Activated T-helper 2 cell treated with anti-CD3 and anti-CD28 coated beads, Interferon-gamma antibody, Interleukin-2, Interleukin-4, amounts not matched to agents 10 μg/mL and 5 μg/mL and 100 μg/mL, durations not matched to agents 14 hours and 24 hours and 36 hours (primary cell): ENCODE measurements at regions of chr1 and their contacts with region 1.

Region 1: GRCh38 chr1:212608209-212608955 is at the start of gene ATF3:
- DNase-seq: peak; percentile 88
- H3K4me3 Mint-ChIP-seq: peak within 1 kb of the TSS; percentile 88
- H3K27ac Mint-ChIP-seq: peak within 1 kb of the TSS; percentile 91
- H3K4me1 Mint-ChIP-seq: peaks cover 44% of the 10 kb centered on the region
- H3K27me3 Mint-ChIP-seq: peaks cover 39% of the 10 kb centered on the region
- total RNA-seq, gene ATF3: 17.9 and 23.9 TPM in 2 replicates

Region 2: GRCh38 chr1:211393203-211393602 is 1215.2 kb before region 1 on chr1:
- intact Hi-C with region 1: no loop called
- DNase-seq: no peak
- H3K4me3 Mint-ChIP-seq: no peak overlapping the region
- H3K27ac Mint-ChIP-seq: no peak overlapping the region
- H3K4me1 Mint-ChIP-seq: no peaks in the 10 kb centered on the region
- H3K27me3 Mint-ChIP-seq: no peaks in the 10 kb centered on the region

Region 3: GRCh38 chr1:212381397-212382035 is 226.9 kb before region 1 on chr1:
- intact Hi-C with region 1: no loop called
- DNase-seq: no peak
- H3K4me3 Mint-ChIP-seq: no peak overlapping the region
- H3K27ac Mint-ChIP-seq: no peak overlapping the region
- H3K4me1 Mint-ChIP-seq: no peaks in the 10 kb centered on the region
- H3K27me3 Mint-ChIP-seq: no peaks in the 10 kb centered on the region

Region 4: DNA sequence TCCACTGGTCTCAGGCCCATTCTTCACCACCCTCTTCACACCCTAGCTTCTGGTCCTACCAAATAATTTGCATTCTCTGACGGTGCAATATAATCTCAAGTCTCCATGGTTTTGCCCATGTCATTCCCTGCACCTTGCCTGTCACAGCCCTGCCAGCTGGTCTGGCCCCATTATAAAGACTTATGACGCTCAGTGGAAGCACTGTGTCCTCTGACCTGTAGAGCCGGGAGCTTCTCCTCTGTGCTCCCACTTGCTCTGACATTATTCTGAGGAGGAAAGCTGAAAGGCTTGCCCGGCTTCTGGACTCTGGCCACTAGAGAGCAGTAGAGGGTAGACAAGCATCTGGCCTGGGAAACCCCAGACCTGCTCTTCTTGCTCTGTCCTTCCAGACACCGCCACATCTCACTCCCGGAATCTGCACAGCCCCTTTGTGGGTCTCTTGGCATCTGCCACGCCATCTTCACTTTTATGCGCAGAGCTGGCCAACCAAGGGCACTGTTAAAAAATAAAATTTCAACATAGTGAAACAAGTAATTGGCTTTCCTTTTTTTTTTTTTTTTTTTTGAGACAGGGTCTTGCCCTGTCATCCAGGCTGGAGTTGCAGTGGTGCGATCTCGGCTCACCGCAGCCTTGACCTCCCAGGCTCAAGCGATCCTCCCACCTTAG is 131.2 kb before region 1 on chr1:
- intact Hi-C with region 1: loop called (anchors 2 kb)
- DNase-seq: peak; percentile 65
- H3K4me3 Mint-ChIP-seq: no peak overlapping the region
- H3K27ac Mint-ChIP-seq: peak overlapping the region; percentile 16
- H3K4me1 Mint-ChIP-seq: peaks cover 12% of the 10 kb centered on the region
- H3K27me3 Mint-ChIP-seq: peaks cover 17% of the 10 kb centered on the region

Region 5: DNA sequence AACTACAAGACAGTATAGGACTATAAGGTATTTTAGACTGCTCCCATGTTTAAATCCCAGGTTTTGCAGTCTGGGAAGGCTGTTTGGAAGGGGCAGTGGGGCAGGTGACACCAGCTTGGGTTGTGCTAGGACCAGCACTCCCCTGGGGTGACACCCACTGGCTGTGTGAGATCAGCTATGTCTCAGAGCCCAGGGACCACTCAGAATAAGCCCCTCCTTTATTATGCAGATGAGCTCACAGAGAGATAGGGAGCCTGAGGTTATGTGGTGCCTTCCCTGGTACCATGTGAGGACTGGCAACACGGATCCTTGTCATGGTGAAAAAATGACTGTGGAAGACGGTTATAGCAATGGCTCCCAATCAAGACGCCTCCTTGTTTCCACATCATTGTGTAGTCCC is 104.7 kb before region 1 on chr1:
- intact Hi-C with region 1: no loop called
- DNase-seq: no peak
- H3K4me3 Mint-ChIP-seq: no peak overlapping the region
- H3K27ac Mint-ChIP-seq: no peak overlapping the region
- H3K4me1 Mint-ChIP-seq: no peaks in the 10 kb centered on the region
- H3K27me3 Mint-ChIP-seq: peaks cover 13% of the 10 kb centered on the region

Region 6: GRCh38 chr1:212558693-212559480 is 49.5 kb before region 1 on chr1:
- intact Hi-C with region 1: loop called (anchors 1 kb)
- DNase-seq: peak; percentile 86
- H3K4me3 Mint-ChIP-seq: peak overlapping the region; percentile 66
- H3K27ac Mint-ChIP-seq: peak overlapping the region; percentile 89
- H3K4me1 Mint-ChIP-seq: peaks cover 9% of the 10 kb centered on the region
- H3K27me3 Mint-ChIP-seq: peaks cover 33% of the 10 kb centered on the region

Region 7: DNA sequence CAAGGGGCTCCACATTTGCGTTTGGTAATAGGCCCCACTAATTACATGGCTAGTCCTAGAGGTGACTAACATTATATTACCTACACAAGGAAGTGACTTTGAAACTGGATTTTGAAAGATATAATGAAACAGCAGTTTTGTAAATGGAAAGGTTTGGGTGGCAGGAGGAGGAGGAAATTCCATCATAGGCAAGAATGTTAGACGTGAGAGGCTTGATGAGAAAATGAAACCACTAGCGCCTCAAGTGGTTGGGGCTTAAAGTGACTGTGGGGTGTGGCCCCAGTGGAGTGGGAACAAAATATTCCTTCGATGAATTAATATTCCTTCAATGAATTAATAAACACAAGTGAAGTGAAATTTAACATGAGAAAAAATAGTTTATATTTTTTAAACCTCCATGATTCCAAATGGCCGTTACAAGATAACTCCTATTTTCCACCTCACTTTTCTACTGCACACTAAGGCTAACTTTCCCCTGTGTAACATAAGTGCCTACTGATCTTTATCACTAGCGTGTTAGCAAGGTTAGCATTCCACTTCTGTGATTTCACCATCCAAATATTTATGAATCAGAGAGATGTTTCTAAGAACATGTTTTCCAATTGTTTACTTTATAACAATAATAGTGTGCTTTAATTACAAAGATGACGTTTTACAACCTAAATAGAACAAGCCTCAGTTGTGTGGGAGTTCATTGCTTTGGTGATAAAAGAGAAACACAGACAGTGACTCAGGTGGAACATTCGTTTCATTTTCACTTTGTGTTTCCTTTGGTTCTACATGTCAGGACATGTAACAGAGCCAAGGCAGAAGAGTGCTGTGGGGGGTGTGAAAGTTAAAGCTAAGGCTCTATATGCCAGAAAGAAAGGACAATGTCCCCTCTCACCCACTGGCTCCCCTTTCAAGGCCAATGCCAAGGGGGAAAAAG is 12.3 kb before region 1 on chr1:
- intact Hi-C with region 1: loop called (anchors 1 kb)
- DNase-seq: peak; percentile 55
- H3K4me3 Mint-ChIP-seq: peak overlapping the region; percentile 43
- H3K27ac Mint-ChIP-seq: peak overlapping the region; percentile 91
- H3K4me1 Mint-ChIP-seq: peaks cover 26% of the 10 kb centered on the region
- H3K27me3 Mint-ChIP-seq: peaks cover 7% of the 10 kb centered on the region

Region 8: GRCh38 chr1:212621951-212622305 is 13.5 kb after region 1 on chr1:
- intact Hi-C with region 1: no loop called
- DNase-seq: no peak
- H3K4me3 Mint-ChIP-seq: no peak overlapping the region
- H3K27ac Mint-ChIP-seq: no peak overlapping the region
- H3K4me1 Mint-ChIP-seq: peaks cover 13% of the 10 kb centered on the region
- H3K27me3 Mint-ChIP-seq: peaks cover 3% of the 10 kb centered on the region

Region 9: DNA sequence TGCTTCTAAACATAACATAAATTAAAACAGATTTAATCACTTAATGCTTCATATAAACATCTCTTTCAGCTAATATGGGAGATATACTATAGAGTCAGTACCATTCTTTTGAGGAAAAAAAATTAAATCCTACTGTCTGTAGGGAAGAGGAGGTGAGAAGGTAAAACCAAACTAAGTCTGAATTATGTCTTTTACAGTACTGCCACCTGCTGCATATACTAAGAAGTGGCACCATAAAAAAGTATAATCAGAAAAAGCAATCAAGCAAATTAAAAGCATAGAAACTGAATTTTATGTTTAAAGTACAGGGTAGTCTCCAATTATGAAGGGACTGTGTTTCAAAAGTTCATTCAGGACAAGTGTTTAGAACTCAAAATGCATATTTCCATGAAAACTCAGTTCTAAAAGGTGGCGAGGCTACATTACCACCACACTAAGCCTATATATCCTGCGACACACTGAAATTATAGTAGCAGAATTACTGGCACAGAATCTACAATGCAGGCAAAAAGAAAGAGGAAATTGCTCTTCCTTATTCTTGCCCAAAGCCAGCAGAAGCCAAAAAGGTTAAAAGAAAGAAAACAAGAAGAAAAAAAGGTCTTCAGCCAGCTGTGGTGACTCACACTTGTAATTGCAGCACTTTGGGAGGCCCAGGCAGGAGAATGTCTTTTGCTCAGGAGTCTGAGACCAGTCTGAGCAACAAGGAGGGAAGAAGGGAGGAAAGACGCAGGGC is 174.2 kb after region 1 on chr1:
- intact Hi-C with region 1: loop called (anchors 2 kb)
- DNase-seq: no peak
- H3K4me3 Mint-ChIP-seq: no peak overlapping the region
- H3K27ac Mint-ChIP-seq: peak overlapping the region; percentile 33
- H3K4me1 Mint-ChIP-seq: peaks cover 18% of the 10 kb centered on the region
- H3K27me3 Mint-ChIP-seq: no peaks in the 10 kb centered on the region